Calu3 (cell line): ENCODE measurements at regions of chr13 and their contacts with region 1.

Region 1: GRCh38 chr13:113448885-113449692 is 4.2 kb downstream of the ADPRHL1 start:
- DNase-seq: peak; percentile 69
- H3K4me3 Mint-ChIP-seq: peak overlapping the region; percentile 64
- H3K27ac Mint-ChIP-seq: peak overlapping the region; percentile 50
- H3K4me1 Mint-ChIP-seq: peaks cover 6% of the 10 kb centered on the region
- H3K27me3 Mint-ChIP-seq: no peaks in the 10 kb centered on the region
- CTCF ChIP-seq: no peak

Region 2: GRCh38 chr13:112740502-112741131 is 708.5 kb before region 1 on chr13:
- CTCF ChIA-PET with region 1: no interaction called
- intact Hi-C with region 1: no loop called
- DNase-seq: no peak
- H3K4me3 Mint-ChIP-seq: no peak overlapping the region
- H3K27ac Mint-ChIP-seq: no peak overlapping the region
- H3K4me1 Mint-ChIP-seq: peaks cover 20% of the 10 kb centered on the region
- H3K27me3 Mint-ChIP-seq: no peaks in the 10 kb centered on the region
- CTCF ChIP-seq: no peak

Region 3: GRCh38 chr13:113238536-113238935 is 210.6 kb before region 1 on chr13:
- CTCF ChIA-PET with region 1: no interaction called
- intact Hi-C with region 1: no loop called
- DNase-seq: no peak
- H3K4me3 Mint-ChIP-seq: no peak overlapping the region
- H3K27ac Mint-ChIP-seq: no peak overlapping the region
- H3K4me1 Mint-ChIP-seq: no peaks in the 10 kb centered on the region
- H3K27me3 Mint-ChIP-seq: no peaks in the 10 kb centered on the region
- CTCF ChIP-seq: no peak

Region 4: GRCh38 chr13:113275387-113275786 is 173.7 kb before region 1 on chr13:
- CTCF ChIA-PET with region 1: no interaction called
- intact Hi-C with region 1: loop called (anchors 5 kb)
- DNase-seq: peak; percentile 50
- H3K4me3 Mint-ChIP-seq: no peak overlapping the region
- H3K27ac Mint-ChIP-seq: no peak overlapping the region
- H3K4me1 Mint-ChIP-seq: peaks cover 6% of the 10 kb centered on the region
- H3K27me3 Mint-ChIP-seq: no peaks in the 10 kb centered on the region
- CTCF ChIP-seq: peak; percentile 21

Region 5: DNA sequence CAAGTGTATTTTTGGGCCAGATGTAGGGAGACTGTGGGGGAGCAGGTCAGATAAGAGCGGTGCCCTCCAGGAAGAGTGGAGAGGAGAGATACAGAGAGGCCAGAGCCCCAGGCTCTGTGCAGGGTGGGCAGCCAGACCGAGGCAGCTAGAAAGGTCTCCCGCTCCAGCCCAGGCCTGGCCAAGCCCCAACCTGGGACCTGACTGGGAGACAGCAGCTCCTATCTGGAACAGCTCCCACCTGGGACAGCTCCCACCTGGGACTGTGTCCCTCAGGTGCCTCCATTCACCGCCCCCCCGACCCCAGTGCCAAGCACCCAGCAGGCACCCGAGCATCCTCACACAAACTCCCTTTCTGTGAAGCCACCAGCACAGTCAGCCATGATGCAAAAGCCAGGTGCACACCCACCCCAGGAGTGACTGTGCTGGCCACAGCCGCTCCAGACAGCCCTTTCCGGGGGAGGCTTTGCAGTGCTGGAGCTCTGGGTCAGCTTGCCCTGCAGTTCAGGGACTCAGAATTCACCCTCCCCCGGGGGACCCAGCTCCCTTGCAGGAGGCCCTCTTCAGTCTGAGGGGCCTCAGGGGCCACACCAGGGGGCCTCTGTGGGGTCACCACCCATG is 83.0 kb before region 1 on chr13:
- CTCF ChIA-PET with region 1: interaction called, 12 read pairs
- intact Hi-C with region 1: no loop called
- DNase-seq: no peak
- H3K4me3 Mint-ChIP-seq: no peak overlapping the region
- H3K27ac Mint-ChIP-seq: no peak overlapping the region
- H3K4me1 Mint-ChIP-seq: no peaks in the 10 kb centered on the region
- H3K27me3 Mint-ChIP-seq: no peaks in the 10 kb centered on the region
- CTCF ChIP-seq: no peak